GM13977 (cell line): ENCODE measurements at regions of chr1 and their contacts with region 1.

Region 1: DNA sequence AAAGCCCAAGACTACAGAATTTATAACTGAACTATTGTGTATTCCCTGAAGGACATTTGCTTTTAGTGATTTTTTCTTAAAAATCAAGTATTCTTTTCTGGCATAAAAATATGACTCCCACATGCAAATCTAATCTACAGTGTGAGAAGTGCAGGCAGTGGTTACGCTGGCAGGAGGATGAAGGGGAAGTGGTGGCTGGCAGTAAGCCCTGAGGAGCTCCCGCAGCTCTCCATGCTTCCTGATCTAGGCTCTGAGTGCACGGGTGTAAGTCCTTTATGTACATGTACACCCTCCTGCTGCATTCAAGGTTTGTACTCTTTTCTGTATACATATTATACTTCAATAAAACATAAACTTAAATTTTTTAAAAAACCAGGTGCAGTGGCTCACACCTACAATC is 67.5 kb upstream of the PRDX6 start:
- DNase-seq: no peak
- CTCF ChIP-seq: no peak

Region 2: GRCh38 chr1:173202430-173203145 is 207.0 kb before region 1 on chr1:
- in situ Hi-C with region 1: no loop called
- DNase-seq: no peak
- CTCF ChIP-seq: peak; percentile 64

Region 3: GRCh38 chr1:173330149-173330951 is 79.3 kb before region 1 on chr1:
- in situ Hi-C with region 1: loop called (anchors 5 kb)
- DNase-seq: no peak
- CTCF ChIP-seq: no peak

Region 4: DNA sequence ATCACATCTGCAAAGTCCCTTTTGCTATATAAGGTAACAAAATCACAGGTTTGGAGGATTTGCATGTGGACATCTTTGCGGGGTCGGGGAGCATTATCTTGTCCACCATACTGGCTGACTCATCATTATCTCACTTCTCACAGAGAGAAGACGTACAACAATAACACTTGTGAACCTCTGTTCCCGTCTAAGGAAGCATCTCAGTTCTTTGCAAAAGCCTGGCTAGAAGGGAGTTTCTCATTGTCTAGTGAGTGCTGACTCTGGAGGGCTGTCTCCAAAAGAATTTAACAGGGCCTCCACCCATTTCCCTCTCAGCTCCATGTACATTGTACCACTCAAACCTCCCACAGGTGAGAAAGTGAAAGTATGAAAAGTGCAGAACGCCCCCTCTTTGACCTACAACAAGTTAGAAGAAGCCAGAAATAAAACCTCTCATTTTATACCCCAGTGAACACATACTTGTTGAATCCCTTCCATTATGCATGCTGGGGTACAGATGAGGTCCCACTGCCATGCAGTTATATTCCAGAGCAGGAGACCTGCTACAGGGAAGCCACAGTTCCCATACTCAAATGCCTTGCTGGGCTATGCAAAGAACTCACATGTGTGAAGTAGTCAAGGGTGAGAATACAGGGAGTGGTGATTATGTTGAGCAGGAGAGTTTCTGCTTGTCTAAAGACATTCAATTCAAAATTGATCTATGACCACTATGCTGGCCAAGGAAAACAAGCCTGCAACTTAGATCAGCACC is 54.2 kb before region 1 on chr1:
- in situ Hi-C with region 1: loop called (anchors 10 kb)
- DNase-seq: peak; percentile 24
- CTCF ChIP-seq: no peak

Region 5: GRCh38 chr1:173367136-173367535 is 42.5 kb before region 1 on chr1:
- in situ Hi-C with region 1: no loop called
- DNase-seq: no peak
- CTCF ChIP-seq: no peak